ENCODE measurements at regions of chr9 and their contacts with region 1.

Region 1: GRCh38 chr9:95510709-95511615 is 5.8 kb downstream of the PTCH1 start:
- DNase-seq: peak; percentile 95
- H3K4me3 ChIP-seq: peak overlapping the region; percentile 19 to 94 (median 87)
- H3K27ac ChIP-seq: peak overlapping the region; percentile 89 to 94 (median 91)
- H3K4me1 ChIP-seq: peaks cover 13 to 14% of the 10 kb centered on the region in 2 donors
- H3K27me3 ChIP-seq: no peaks in the 10 kb centered on the region
- CTCF ChIP-seq: peak in 1 of 6 experiments; percentile 2
- POLR2A ChIP-seq: peak in 1 of 2 donors; percentile 91

Region 2: GRCh38 chr9:95048225-95049087 is 462.5 kb before region 1 on chr9:
- intact Hi-C with region 1: no loop called
- DNase-seq: peak; percentile 83 to 88
- H3K4me3 ChIP-seq: peak overlapping the region; percentile 8 to 39 (median 29)
- H3K27ac ChIP-seq: peak overlapping the region; percentile 82 to 90 (median 85)
- H3K4me1 ChIP-seq: peaks cover 43 to 44% of the 10 kb centered on the region in 2 donors
- H3K27me3 ChIP-seq: no peaks in the 10 kb centered on the region
- CTCF ChIP-seq: no peak
- POLR2A ChIP-seq: peak in 1 of 2 donors; percentile 84

Region 3: DNA sequence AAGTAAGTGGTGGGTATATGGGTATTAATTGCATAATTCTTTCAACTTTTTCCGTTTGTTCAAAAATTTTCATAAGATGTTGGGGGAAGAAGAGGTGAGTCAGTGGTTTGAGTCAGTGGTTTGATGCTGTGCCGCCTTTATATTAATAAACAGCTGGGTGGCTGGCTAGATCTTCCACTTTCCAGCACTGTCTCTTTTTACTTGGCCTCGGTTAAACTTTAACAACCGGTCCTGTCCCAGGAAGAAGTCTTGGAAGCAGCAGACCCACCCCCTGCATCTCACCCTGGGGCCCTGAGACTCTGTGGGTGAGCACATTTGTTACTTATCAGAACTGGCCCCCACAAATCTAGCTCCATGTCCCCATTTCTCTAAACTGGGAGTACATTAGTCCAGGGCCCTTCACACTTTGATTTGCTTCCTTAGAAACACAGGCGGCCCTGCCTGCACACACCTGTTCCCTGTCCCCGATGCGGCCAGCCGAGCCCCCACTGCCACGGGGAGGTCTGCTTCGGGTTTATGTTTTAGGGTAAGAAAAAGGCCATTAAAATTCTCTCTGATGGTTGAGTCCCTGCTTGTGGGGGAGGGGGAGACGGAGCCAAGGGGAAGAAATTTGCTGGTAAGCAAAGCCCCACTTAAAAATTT is 84.9 kb before region 1 on chr9:
- intact Hi-C with region 1: loop called (anchors 5 kb)
- DNase-seq: peak; percentile 24 to 30
- H3K4me3 ChIP-seq: peak overlapping the region; percentile 4 to 33 (median 33)
- H3K27ac ChIP-seq: peak overlapping the region in 2 of 3 donors; percentile 65 to 79
- H3K4me1 ChIP-seq: peaks cover 0 to 6% of the 10 kb centered on the region in 2 donors
- H3K27me3 ChIP-seq: no peaks in the 10 kb centered on the region
- CTCF ChIP-seq: no peak
- POLR2A ChIP-seq: no peak

Region 4: GRCh38 chr9:95875305-95876137 is 364.6 kb after region 1 on chr9 and contains the start of gene ERCC6L2:
- intact Hi-C with region 1: loop called (anchors 5 kb)
- DNase-seq: peak; percentile 95
- H3K4me3 ChIP-seq: peak within 1 kb of the TSS in 2 of 3 donors; percentile 66 to 79
- H3K27ac ChIP-seq: peak within 1 kb of the TSS; percentile 99 to 100 (median 100)
- H3K4me1 ChIP-seq: peaks cover 11 to 19% of the 10 kb centered on the region in 2 donors
- H3K27me3 ChIP-seq: no peaks in the 10 kb centered on the region
- CTCF ChIP-seq: peak in 1 of 6 experiments; percentile 11
- POLR2A ChIP-seq: peak in 1 of 2 donors; percentile 87
- total RNA-seq, gene ERCC6L2: 90.6 to 130 (median 95.3) TPM